WTC11 (cell line): ENCODE measurements at regions of chr19 and their contacts with region 1.

Region 1: GRCh38 chr19:40549007-40549708 is 27.5 kb upstream of the SHKBP1 start:
- DNase-seq: peak; percentile 96
- ATAC-seq: peak; percentile 93
- H3K4me3 Mint-ChIP-seq: peak overlapping the region; percentile 61
- H3K27ac Mint-ChIP-seq: no peak overlapping the region
- H3K4me1 Mint-ChIP-seq: peaks cover 8% of the 10 kb centered on the region
- H3K27me3 Mint-ChIP-seq: peaks cover 78% of the 10 kb centered on the region
- CTCF ChIP-seq: peak; percentile 41; the same call in 1 of the 2 replicates

Region 2: DNA sequence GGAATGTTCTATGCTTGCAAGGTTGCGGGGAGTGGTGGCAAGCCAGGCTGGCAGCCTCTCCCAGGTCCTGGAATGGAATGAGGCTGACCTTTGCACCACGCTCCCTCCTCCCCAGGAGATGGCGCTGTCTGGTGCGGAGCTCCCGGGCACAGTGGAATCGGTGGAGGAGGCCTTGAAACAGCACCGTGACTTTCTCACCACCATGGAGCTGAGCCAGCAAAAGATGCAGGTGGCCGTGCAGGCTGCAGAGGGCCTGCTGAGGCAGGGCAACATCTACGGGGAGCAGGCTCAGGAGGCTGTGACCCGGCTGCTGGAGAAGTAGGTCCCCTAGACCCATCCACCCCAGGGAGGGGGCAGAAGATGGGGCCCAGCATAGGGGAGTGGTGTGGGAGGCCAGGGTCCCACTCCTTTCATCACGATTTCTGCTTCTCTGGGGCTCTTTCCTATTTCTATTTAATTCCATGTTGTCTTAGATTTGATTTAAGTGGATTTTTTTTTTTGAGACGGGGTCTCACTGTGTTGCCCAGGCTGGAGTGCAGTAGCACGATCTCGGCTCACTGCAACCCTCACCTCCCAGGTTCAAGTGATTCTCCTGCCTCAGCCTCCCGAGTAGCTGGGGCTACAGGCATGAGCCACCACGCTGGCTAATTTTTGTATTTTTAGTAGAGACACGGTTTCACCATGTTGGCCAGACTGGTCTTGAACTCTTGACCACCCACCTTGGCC is 25.7 kb before region 1 on chr19:
- CTCF ChIA-PET with region 1: interaction called, 14 read pairs
- POLR2A ChIA-PET with region 1: no interaction called
- DNase-seq: peak; percentile 87
- ATAC-seq: peak; percentile 91
- H3K4me3 Mint-ChIP-seq: no peak overlapping the region
- H3K27ac Mint-ChIP-seq: no peak overlapping the region
- H3K4me1 Mint-ChIP-seq: peaks cover 6% of the 10 kb centered on the region
- H3K27me3 Mint-ChIP-seq: peaks cover 65% of the 10 kb centered on the region
- CTCF ChIP-seq: peak; percentile 75

Region 3: GRCh38 chr19:40560092-40560507 is 10.9 kb after region 1 on chr19:
- CTCF ChIA-PET with region 1: interaction called, 31 read pairs
- POLR2A ChIA-PET with region 1: no interaction called
- DNase-seq: no peak
- ATAC-seq: peak; percentile 62; the same call in 1 of the 2 replicates
- H3K4me3 Mint-ChIP-seq: no peak overlapping the region
- H3K27ac Mint-ChIP-seq: no peak overlapping the region
- H3K4me1 Mint-ChIP-seq: no peaks in the 10 kb centered on the region
- H3K27me3 Mint-ChIP-seq: peaks cover 81% of the 10 kb centered on the region
- CTCF ChIP-seq: no peak

Region 4: DNA sequence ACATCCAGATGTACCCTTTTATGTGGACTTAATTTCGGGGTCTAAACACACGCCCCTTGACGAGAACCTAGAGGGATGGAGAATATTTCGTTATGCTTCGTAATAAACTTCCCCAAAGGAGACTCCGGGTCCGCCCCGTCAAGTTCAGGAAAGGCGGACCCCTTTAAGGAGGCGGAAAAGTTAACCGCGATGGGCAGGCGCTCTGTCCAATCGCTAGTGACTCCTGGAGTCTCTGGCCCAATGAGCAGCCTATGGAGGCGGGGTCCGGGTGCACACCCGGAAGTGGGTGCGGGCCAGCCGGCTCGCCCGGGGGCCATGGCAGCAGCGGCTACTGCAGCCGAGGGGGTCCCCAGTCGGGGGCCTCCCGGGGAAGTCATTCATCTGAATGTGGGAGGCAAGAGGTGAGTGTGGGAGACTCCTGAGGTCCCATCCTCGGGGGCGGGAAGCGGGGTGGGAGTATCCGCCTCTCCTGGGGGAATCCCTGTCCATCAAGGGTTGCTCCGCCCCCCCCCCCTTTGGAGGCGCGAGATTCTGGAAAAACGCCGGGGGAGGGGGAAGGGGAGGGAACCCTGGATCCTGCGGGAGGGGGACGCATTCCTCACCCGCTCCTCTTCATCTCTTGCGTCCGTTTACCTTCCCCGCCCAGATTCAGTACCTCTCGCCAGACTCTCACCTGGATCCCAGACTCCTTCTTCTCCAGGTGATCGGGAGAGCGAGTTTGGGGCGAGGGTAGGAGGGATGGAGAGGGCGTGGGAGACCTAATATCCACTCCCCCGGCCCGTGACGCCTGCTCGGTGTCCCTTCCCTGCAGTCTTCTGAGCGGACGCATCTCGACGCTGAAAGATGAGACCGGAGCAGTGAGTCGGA is 27.7 kb after region 1 on chr19 and contains the start of gene SHKBP1:
- CTCF ChIA-PET with region 1: interaction called, 14 read pairs
- POLR2A ChIA-PET with region 1: no interaction called
- DNase-seq: peak; percentile 96
- ATAC-seq: peak; percentile 89
- H3K4me3 Mint-ChIP-seq: peak within 1 kb of the TSS; percentile 93
- H3K27ac Mint-ChIP-seq: peak within 1 kb of the TSS; percentile 91
- H3K4me1 Mint-ChIP-seq: peaks cover 17% of the 10 kb centered on the region
- H3K27me3 Mint-ChIP-seq: peaks cover 21% of the 10 kb centered on the region
- CTCF ChIP-seq: no peak
- total RNA-seq, gene SHKBP1: 71.7 to 82.1 TPM (median 76.9 TPM) in 3 replicates

Region 5: GRCh38 chr19:40640744-40641143 is 91.6 kb after region 1 on chr19:
- CTCF ChIA-PET with region 1: interaction called, 43 read pairs
- POLR2A ChIA-PET with region 1: no interaction called
- DNase-seq: no peak
- ATAC-seq: no peak; the same call in 1 of the 2 replicates
- H3K4me3 Mint-ChIP-seq: no peak overlapping the region
- H3K27ac Mint-ChIP-seq: no peak overlapping the region
- H3K4me1 Mint-ChIP-seq: peaks cover 10% of the 10 kb centered on the region
- H3K27me3 Mint-ChIP-seq: peaks cover 15% of the 10 kb centered on the region
- CTCF ChIP-seq: no peak

Region 6: DNA sequence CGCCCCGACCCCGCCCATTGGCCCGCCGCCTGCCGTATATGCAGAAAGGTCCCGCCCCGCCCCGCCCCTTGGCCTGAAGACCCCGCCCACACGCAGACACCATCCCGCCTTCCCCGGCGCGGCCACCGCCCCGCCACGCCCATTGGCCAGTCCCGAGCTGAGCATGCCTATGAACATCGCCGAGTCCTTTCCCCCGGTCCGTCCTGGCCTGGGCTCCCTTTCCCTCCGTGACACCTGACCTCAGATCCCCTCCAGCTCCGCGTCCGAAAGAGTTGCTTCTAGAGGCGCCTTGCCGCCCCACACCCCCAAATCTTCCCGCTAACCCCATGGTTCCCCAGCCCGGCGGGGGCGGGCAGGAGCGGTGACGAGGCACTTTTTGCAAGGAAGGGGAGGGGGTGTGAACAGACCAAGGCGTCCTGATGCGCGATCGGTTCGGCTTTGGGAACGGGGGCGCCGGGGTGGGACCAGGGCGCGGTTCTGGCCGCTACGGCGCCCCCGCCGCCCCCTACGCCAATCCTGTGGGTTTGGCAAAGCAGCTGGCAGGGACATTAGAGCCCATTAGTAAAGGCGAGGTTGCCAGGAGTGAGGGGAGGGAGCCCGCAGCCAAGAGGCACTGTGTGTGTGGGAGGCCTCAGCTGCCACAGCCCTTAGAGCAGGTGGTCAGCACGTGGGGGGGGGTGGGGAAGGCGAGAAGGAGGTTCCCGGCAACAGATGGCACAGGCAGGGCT is 141.7 kb after region 1 on chr19:
- CTCF ChIA-PET with region 1: no interaction called
- POLR2A ChIA-PET with region 1: no interaction called
- DNase-seq: peak; percentile 91
- ATAC-seq: peak; percentile 83
- H3K4me3 Mint-ChIP-seq: peak overlapping the region; percentile 86
- H3K27ac Mint-ChIP-seq: peak overlapping the region; percentile 95
- H3K4me1 Mint-ChIP-seq: peaks cover 6% of the 10 kb centered on the region
- H3K27me3 Mint-ChIP-seq: no peaks in the 10 kb centered on the region
- CTCF ChIP-seq: no peak